IMR-90 (cell line): ENCODE measurements at regions of chr3 and their contacts with region 1.

Region 1: DNA sequence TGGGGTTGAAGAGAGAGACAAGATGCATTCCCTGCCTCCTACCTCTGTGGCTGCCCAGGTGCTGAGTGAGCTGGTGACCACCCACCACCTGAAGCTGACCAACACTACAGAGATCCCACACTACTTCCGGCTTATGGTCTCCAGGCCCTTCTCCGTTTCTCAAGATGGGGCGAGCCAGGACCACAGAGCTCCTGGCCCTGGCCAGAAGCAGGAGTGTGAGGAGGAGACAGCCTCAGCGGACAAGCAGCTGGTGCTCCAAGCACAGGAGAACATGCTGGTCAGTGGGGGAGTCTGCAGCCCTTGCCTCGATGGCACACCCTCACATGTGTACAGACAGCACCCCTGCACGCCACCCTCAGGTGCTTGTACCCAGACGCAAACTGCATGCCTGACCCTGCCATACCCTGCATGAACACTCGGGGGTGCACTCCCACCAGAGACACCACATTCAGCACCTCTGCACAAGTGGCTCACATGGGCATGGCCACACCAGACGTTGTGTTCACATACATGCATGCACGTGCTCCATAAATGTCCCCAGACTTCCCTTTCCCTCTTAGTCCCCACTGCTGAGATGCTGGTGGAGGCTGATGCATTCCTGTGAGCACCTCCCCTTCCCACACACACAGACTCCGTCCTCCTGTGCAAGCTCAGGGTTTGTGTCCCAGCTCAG is 19.0 kb downstream of the ACAA1 start:
- DNase-seq: peak; percentile 55
- ATAC-seq: peak; percentile 81
- H3K4me3 ChIP-seq: no peak overlapping the region
- H3K27ac ChIP-seq: no peak overlapping the region
- H3K4me1 ChIP-seq: no peaks in the 10 kb centered on the region
- H3K27me3 ChIP-seq: peaks cover 8% of the 10 kb centered on the region
- CTCF ChIP-seq: peak; percentile 69
- POLR2A ChIP-seq: no peak
- RAD21 ChIP-seq: peak; percentile 84

Region 2: GRCh38 chr3:38297947-38298711 is 180.2 kb after region 1 on chr3:
- CTCF ChIA-PET with region 1: interaction called, 3 read pairs
- POLR2A ChIA-PET with region 1: no interaction called
- dilution Hi-C with region 1: no loop called
- in situ Hi-C with region 1: no loop called
- intact Hi-C with region 1: loop called (anchors 1 kb)
- DNase-seq: peak; percentile 29
- ATAC-seq: peak; percentile 80
- H3K4me3 ChIP-seq: no peak overlapping the region
- H3K27ac ChIP-seq: no peak overlapping the region
- H3K4me1 ChIP-seq: no peaks in the 10 kb centered on the region
- H3K27me3 ChIP-seq: peaks cover under 1% of the 10 kb centered on the region; the same call in 1 of the 2 replicates
- CTCF ChIP-seq: peak; percentile 41
- POLR2A ChIP-seq: no peak
- RAD21 ChIP-seq: peak; percentile 24; the same call in 1 of the 2 replicates